Panc1 (cell line): ENCODE measurements at regions of chr3 and their contacts with region 1.

Region 1: DNA sequence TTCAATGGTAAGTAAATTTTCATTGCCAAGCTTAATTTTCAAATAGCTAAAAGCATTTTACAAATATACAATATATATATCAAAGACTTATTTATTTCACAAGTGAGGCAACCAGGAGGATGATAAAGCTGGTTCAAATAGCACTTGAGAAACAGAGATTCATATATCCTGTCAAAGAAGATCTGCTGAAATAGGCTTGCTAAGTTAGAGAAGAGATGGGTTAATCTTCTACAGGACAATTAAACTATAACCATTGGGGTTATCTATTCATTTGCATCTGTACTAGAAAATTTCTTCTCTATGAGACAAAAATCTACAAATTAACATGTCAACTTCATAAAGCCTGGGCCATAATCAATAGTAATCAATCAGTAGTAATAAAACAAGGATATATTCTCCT is 637.7 kb upstream of the UBE2E2 start:
- DNase-seq: no peak
- ATAC-seq: no peak
- H3K4me3 ChIP-seq: no peak overlapping the region
- H3K27ac ChIP-seq: no peak overlapping the region
- H3K4me1 ChIP-seq: no peaks in the 10 kb centered on the region
- H3K27me3 ChIP-seq: no peaks in the 10 kb centered on the region
- CTCF ChIP-seq: no peak

Region 2: GRCh38 chr3:22691407-22691806 is 126.0 kb after region 1 on chr3:
- CTCF ChIA-PET with region 1: no interaction called
- POLR2A ChIA-PET with region 1: no interaction called
- in situ Hi-C with region 1: no loop called
- intact Hi-C with region 1: loop called (anchors 10 kb)
- DNase-seq: no peak
- ATAC-seq: no peak
- H3K4me3 ChIP-seq: no peak overlapping the region
- H3K27ac ChIP-seq: no peak overlapping the region
- H3K4me1 ChIP-seq: no peaks in the 10 kb centered on the region
- H3K27me3 ChIP-seq: no peaks in the 10 kb centered on the region
- CTCF ChIP-seq: no peak

Region 3: DNA sequence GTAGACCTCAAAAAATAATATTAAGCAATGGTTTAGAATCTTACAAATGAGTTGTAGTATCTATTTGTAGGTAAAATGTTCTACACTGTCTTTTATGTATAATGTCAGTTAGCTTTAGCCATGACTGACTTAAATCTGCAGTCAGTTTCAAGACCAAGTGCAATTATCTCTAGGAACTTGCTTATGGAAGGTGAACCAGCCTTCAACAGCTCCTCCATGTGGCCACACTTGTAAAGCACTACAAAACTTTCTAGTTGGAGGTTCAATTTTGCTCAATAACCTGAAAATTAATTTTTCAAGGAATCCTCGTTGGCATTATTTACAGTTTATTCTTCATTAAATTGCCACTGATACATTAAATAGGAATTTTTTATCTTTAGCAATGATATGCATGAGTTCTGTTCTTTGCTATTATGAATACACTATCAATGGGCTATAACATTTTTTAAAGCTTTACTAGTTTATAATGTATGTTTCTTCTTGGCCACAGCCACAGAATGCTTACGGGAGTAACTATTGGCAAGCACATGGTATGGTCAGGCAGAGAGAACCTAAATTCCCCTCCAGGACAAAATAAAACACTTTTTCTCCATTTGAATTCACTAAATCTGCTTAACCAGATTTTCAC is 322.4 kb after region 1 on chr3:
- CTCF ChIA-PET with region 1: no interaction called
- POLR2A ChIA-PET with region 1: no interaction called
- in situ Hi-C with region 1: no loop called
- intact Hi-C with region 1: loop called (anchors 10 kb)
- DNase-seq: peak; percentile 1
- ATAC-seq: no peak
- H3K4me3 ChIP-seq: no peak overlapping the region
- H3K27ac ChIP-seq: no peak overlapping the region
- H3K4me1 ChIP-seq: no peaks in the 10 kb centered on the region
- H3K27me3 ChIP-seq: no peaks in the 10 kb centered on the region
- CTCF ChIP-seq: peak; percentile 56; the same call in 1 of the 2 replicates

Region 4: DNA sequence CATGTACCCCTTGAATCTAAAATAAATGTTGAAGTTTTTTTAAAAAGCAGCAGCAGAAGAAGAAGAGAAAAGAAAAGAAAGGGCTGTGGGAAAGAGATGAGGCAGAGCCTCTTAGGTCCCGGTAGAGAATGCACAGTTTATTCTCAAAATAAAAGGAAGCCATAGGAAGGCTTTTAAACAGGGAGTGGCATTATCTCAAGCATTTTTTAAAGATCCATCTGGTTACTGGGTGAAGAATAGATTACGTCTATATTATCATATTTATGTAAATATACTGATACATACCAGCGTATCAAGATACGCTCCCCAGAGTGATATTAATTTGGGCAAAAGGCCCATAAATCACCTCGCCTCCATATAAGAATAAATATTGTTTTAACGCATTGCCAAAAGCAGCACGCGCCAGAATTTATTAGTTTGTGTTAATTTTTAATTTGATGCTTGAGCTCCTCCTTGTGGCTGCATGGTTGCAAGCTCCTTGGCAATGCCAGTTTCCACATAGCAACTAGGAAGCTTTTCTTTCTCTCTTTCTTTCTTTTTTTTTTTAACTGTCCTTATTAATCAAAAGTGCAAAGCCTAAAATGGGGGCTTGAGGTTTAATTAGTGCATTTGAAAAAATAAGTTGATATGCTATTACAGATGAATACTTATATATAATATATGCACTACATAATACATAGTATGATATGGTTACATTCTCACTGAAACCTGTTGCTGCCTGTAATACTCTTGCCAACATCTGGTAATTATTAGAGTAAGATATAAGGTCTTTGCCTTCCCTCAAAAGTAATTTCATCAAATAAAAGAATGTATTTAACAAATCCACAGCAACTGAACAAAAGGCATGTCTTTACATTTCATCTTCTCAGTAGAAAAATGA is 395.0 kb after region 1 on chr3:
- CTCF ChIA-PET with region 1: interaction called, 4 read pairs
- POLR2A ChIA-PET with region 1: no interaction called
- in situ Hi-C with region 1: no loop called
- intact Hi-C with region 1: loop called (anchors 1 kb)
- DNase-seq: peak; percentile 15
- ATAC-seq: no peak
- H3K4me3 ChIP-seq: no peak overlapping the region
- H3K27ac ChIP-seq: no peak overlapping the region
- H3K4me1 ChIP-seq: no peaks in the 10 kb centered on the region
- H3K27me3 ChIP-seq: no peaks in the 10 kb centered on the region
- CTCF ChIP-seq: peak; percentile 74